Endothelial cell of umbilical vein (primary cell): ENCODE measurements at regions of chr13 and their contacts with region 1.

Region 1: DNA sequence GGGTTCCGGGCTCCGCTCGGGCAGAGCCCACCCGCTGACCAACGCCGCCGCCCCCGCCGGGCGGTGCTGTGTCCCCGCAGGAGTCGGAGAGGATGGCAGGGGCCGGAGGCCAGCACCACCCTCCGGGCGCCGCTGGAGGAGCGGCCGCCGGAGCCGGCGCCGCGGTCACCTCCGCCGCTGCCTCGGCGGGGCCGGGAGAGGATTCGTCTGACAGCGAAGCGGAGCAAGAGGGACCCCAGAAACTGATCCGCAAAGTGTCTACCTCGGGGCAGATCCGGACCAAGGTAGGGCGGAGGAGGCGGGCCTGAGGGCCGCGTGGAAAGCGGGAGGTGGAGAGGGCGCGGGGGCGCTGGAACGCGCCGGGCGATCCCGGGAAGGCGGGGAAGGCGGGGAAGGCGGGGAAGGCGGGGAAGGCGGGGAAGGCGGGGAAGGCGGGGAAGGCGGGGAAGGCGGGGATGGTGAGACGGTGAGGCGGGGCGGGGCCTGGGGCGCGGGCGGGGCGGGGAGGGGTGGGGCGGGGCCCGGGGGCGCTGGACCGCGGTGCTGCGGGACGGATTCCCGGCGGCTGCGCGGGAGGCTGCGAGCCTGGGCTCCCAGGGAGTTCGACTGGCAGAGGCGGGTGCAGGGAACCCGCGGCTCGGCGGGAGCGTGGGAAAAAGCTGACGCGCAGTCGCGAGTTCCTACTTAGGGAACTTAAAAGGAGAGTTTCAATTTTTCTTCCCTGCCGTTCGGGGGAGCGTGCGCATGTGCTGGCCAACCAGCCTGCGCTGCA is 420 bp downstream of the DGKH start:
- DNase-seq: peak; percentile 71
- H3K4me3 ChIP-seq: peak overlapping the region; percentile 62 to 86 (median 79)
- H3K27ac ChIP-seq: peak overlapping the region; percentile 74
- H3K4me1 ChIP-seq: peaks cover 10% of the 10 kb centered on the region
- H3K27me3 ChIP-seq: no peaks in the 10 kb centered on the region
- CTCF ChIP-seq: peak in 1 of 2 donors; percentile 10
- POLR2A ChIP-seq: peak; percentile 44

Region 2: GRCh38 chr13:41352935-41353840 is 695.7 kb before region 1 on chr13:
- CTCF ChIA-PET with region 1: no interaction called
- POLR2A ChIA-PET with region 1: no interaction called
- dilution Hi-C with region 1: no loop called
- intact Hi-C with region 1: loop called (anchors 2 kb)
- DNase-seq: peak; percentile 87
- H3K4me3 ChIP-seq: no peak overlapping the region
- H3K27ac ChIP-seq: peak overlapping the region; percentile 72
- H3K4me1 ChIP-seq: peaks cover 12% of the 10 kb centered on the region
- H3K27me3 ChIP-seq: no peaks in the 10 kb centered on the region
- CTCF ChIP-seq: peak; percentile 59 to 69
- POLR2A ChIP-seq: no peak

Region 3: DNA sequence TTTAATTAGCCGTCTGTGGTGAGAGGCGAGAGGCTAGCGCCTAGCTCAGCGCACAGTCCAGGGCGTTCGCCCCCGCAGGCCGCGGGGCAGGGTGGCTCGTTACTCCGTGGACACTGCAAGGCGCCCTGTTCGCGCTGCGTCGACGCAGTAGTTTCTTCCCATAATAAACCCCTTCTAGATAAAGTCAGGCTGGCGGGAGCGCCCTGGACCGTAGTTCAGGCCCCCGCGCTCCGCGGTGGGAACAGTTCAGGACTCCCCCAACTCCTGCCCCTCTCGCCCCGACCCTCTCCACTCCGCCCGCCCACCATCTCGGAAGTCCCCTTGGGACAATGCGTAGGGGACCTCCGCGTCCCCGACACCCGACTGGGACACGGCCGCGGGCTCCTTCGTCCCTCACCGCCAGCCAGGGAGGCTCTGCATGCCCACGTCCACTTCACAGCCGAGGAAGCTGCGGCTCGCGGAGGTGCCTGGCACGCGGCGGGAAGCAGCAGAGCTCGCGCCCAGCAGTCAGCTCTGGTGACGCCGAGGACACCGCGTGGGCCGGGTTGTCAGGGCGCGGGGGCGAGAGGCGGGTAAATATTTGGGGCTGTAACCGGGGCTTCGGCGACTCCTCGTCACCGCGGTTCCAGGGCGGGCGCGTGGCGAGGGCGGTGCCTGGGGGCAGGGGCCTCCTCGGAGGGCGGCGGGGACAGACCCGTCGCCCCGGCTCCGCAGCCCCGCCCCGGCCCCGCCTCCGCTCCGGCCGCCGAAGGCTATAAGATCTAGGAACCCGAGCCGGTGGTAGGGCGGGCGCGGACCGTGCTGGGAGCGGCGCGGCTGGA is 591.9 kb before region 1 on chr13 and contains the start of gene RGCC:
- CTCF ChIA-PET with region 1: no interaction called
- POLR2A ChIA-PET with region 1: no interaction called
- dilution Hi-C with region 1: no loop called
- intact Hi-C with region 1: loop called (anchors 5 kb)
- DNase-seq: peak; percentile 74
- H3K4me3 ChIP-seq: peak within 1 kb of the TSS; percentile 56 to 90 (median 66)
- H3K27ac ChIP-seq: peak within 1 kb of the TSS; percentile 49
- H3K4me1 ChIP-seq: peaks cover 19% of the 10 kb centered on the region
- H3K27me3 ChIP-seq: peaks cover 11 to 12% of the 10 kb centered on the region in 2 experiments
- CTCF ChIP-seq: no peak
- POLR2A ChIP-seq: peak; percentile 87
- total RNA-seq, gene RGCC: 138 and 148 TPM in 2 replicates

Region 4: DNA sequence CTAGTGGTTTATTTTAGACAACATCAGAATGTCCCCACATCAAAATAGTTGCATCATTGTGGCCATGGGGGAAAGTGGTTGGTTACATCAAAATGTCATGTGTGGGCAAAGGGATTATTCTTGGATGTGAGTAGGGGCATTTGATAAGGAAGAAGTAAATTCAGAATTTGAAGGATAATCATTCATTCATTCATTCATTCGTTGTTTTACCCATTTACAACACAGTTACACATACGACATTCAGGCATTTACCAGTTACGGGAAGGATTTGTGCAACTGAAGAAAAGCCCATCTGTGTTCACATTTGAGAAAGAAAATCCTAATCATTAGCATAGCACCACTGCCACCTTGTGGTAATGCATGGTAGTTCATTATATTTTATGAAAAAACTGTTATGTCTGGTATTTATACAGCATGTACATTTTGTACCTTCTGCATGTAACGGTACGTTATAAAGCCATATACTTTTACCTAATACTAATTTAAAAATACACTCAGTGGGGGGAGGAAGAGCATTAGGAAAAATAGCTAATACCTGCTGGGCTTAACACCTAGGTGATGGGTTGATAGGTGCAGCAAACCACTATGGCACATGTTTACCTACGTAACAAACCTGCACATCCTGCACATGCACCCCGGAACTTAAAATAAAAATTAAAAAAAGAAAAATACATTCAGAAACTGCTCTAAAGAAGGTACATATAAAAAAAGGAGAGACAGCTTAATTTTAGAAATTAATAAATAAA is 61.7 kb after region 1 on chr13:
- CTCF ChIA-PET with region 1: interaction called, 11 read pairs
- POLR2A ChIA-PET with region 1: no interaction called
- dilution Hi-C with region 1: no loop called
- intact Hi-C with region 1: loop called (anchors 1 kb)
- DNase-seq: peak; percentile 84
- H3K4me3 ChIP-seq: no peak overlapping the region
- H3K27ac ChIP-seq: no peak overlapping the region
- H3K4me1 ChIP-seq: no peaks in the 10 kb centered on the region
- H3K27me3 ChIP-seq: no peaks in the 10 kb centered on the region
- CTCF ChIP-seq: peak; percentile 38 to 52
- POLR2A ChIP-seq: no peak

Region 5: GRCh38 chr13:42271337-42272114 is 222.7 kb after region 1 on chr13:
- CTCF ChIA-PET with region 1: no interaction called
- POLR2A ChIA-PET with region 1: no interaction called
- dilution Hi-C with region 1: no loop called
- intact Hi-C with region 1: loop called (anchors 5 kb)
- DNase-seq: peak; percentile 98
- H3K4me3 ChIP-seq: peak overlapping the region; percentile 40 to 86 (median 59)
- H3K27ac ChIP-seq: peak overlapping the region; percentile 81
- H3K4me1 ChIP-seq: peaks cover 23% of the 10 kb centered on the region
- H3K27me3 ChIP-seq: no peaks in the 10 kb centered on the region
- CTCF ChIP-seq: no peak
- POLR2A ChIP-seq: no peak